HepG2 (cell line): ENCODE measurements at regions of chr4 and their contacts with region 1.

Region 1: GRCh38 chr4:108181704-108182103 is 13.0 kb upstream of the LEF1 start:
- DNase-seq: peak; percentile 16
- ATAC-seq: peak; percentile 91
- H3K4me3 ChIP-seq: no peak overlapping the region
- H3K27ac ChIP-seq: no peak overlapping the region
- H3K4me1 ChIP-seq: no peaks in the 10 kb centered on the region
- H3K27me3 ChIP-seq: no peaks in the 10 kb centered on the region
- CTCF ChIP-seq: peak; percentile 32; the same call in 1 of the 2 replicates
- EP300 ChIP-seq: no peak
- POLR2A ChIP-seq: no peak
- RAD21 ChIP-seq: no peak

Region 2: DNA sequence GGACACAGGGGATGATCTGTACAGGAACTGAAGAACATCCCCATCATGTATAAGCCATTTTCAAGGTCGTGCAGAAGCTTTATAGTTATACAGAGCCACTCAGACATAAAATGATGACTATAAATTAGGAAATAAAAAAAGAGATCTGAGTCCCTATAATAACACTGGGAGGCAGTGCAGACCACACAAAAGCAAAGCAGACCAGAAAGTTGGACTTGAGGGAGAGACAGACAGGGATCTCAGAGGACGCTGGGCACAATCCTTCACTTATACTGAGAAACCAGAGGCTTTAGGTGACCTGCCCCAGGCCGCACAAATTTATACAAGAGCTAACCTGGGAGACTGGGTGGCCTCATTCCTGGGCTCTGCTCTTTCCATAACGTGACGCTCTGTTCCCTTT is 121.5 kb before region 1 on chr4:
- CTCF ChIA-PET with region 1: no interaction called
- POLR2A ChIA-PET with region 1: no interaction called
- in situ Hi-C with region 1: no loop called
- intact Hi-C with region 1: loop called (anchors 1 kb)
- DNase-seq: peak; percentile 2
- ATAC-seq: peak; percentile 42; the same call in 2 of the 3 replicates
- H3K4me3 ChIP-seq: no peak overlapping the region
- H3K27ac ChIP-seq: no peak overlapping the region
- H3K4me1 ChIP-seq: peaks cover 8% of the 10 kb centered on the region; the same call in 1 of the 2 replicates
- H3K27me3 ChIP-seq: no peaks in the 10 kb centered on the region; a peak in 1 of 5 replicates
- CTCF ChIP-seq: peak; percentile 30; the same call in 1 of the 2 replicates
- EP300 ChIP-seq: no peak
- POLR2A ChIP-seq: no peak
- RAD21 ChIP-seq: no peak

Region 3: GRCh38 chr4:108240366-108240765 is 58.7 kb after region 1 on chr4:
- CTCF ChIA-PET with region 1: no interaction called
- POLR2A ChIA-PET with region 1: no interaction called
- in situ Hi-C with region 1: no loop called
- intact Hi-C with region 1: no loop called
- DNase-seq: no peak
- ATAC-seq: no peak
- H3K4me3 ChIP-seq: no peak overlapping the region
- H3K27ac ChIP-seq: no peak overlapping the region
- H3K4me1 ChIP-seq: no peaks in the 10 kb centered on the region
- H3K27me3 ChIP-seq: no peaks in the 10 kb centered on the region
- CTCF ChIP-seq: no peak
- EP300 ChIP-seq: no peak
- POLR2A ChIP-seq: no peak
- RAD21 ChIP-seq: no peak